ENCODE measurements at regions of chr12 and their contacts with region 1.

Region 1: GRCh38 chr12:18158774-18159557 is 69.0 kb upstream of the RERGL start:
- DNase-seq: no peak
- ATAC-seq: peak in 2 of 4 donors; percentile 52 to 62
- H3K4me3 ChIP-seq: no peak overlapping the region
- H3K27ac ChIP-seq: no peak overlapping the region
- H3K4me1 ChIP-seq: no peaks in the 10 kb centered on the region
- H3K27me3 ChIP-seq: no peaks in the 10 kb centered on the region
- CTCF ChIP-seq: peak; percentile 32 to 67 (median 54)
- POLR2A ChIP-seq: no peak

Region 2: GRCh38 chr12:18066666-18067065 is 92.3 kb before region 1 on chr12:
- intact Hi-C with region 1: no loop called
- DNase-seq: no peak
- ATAC-seq: no peak
- H3K4me3 ChIP-seq: no peak overlapping the region
- H3K27ac ChIP-seq: no peak overlapping the region
- H3K4me1 ChIP-seq: no peaks in the 10 kb centered on the region
- H3K27me3 ChIP-seq: no peaks in the 10 kb centered on the region
- CTCF ChIP-seq: no peak
- POLR2A ChIP-seq: no peak

Region 3: DNA sequence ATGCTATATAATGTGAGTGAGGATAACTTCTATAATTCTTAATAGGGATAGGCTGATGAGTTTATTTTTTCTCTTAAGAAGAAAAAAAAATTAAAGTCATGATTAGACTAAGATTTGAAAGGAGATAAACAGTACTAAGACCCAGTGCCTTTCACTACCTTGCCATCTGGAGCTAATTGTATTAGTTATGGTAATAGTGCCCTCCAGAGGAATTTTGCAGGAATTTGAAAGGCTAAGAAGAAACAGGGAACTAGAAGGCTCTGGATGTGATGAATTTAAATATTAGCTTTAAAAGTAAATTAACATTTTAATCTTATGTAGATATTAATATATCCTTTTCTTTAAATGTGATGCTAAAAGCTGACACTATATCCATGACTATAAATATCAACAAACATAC is 65.8 kb after region 1 on chr12:
- intact Hi-C with region 1: loop called in 1 of 2 experiments (anchors 10 kb)
- DNase-seq: no peak
- ATAC-seq: peak; percentile 74 to 92 (median 84)
- H3K4me3 ChIP-seq: no peak overlapping the region
- H3K27ac ChIP-seq: no peak overlapping the region
- H3K4me1 ChIP-seq: no peaks in the 10 kb centered on the region
- H3K27me3 ChIP-seq: no peaks in the 10 kb centered on the region
- CTCF ChIP-seq: peak; percentile 53 to 72 (median 70)
- POLR2A ChIP-seq: no peak

Region 4: GRCh38 chr12:18302809-18303430 is 144.0 kb after region 1 on chr12:
- intact Hi-C with region 1: no loop called
- DNase-seq: no peak
- ATAC-seq: no peak
- H3K4me3 ChIP-seq: no peak overlapping the region
- H3K27ac ChIP-seq: no peak overlapping the region
- H3K4me1 ChIP-seq: no peaks in the 10 kb centered on the region
- H3K27me3 ChIP-seq: no peaks in the 10 kb centered on the region
- CTCF ChIP-seq: no peak
- POLR2A ChIP-seq: no peak

Measured in right lobe of liver (tissue), 6 donors.